GM10248 (cell line): ENCODE measurements at regions of chr3 and their contacts with region 1.

Region 1: GRCh38 chr3:58630076-58630709 is 36.4 kb downstream of the FAM3D start:
- DNase-seq: peak; percentile 68
- CTCF ChIP-seq: peak; percentile 88

Region 2: GRCh38 chr3:58608648-58609047 is 21.5 kb before region 1 on chr3:
- CTCF ChIA-PET with region 1: interaction called, 14 read pairs
- POLR2A ChIA-PET with region 1: no interaction called
- DNase-seq: no peak
- CTCF ChIP-seq: no peak

Region 3: GRCh38 chr3:58617338-58617761 is 12.8 kb before region 1 on chr3:
- CTCF ChIA-PET with region 1: interaction called, 29 read pairs
- POLR2A ChIA-PET with region 1: no interaction called
- DNase-seq: no peak
- CTCF ChIP-seq: no peak

Region 4: GRCh38 chr3:58640700-58641372 is 10.6 kb after region 1 on chr3:
- CTCF ChIA-PET with region 1: interaction called, 81 read pairs
- POLR2A ChIA-PET with region 1: no interaction called
- DNase-seq: peak; percentile 82
- CTCF ChIP-seq: peak; percentile 87

Region 5: DNA sequence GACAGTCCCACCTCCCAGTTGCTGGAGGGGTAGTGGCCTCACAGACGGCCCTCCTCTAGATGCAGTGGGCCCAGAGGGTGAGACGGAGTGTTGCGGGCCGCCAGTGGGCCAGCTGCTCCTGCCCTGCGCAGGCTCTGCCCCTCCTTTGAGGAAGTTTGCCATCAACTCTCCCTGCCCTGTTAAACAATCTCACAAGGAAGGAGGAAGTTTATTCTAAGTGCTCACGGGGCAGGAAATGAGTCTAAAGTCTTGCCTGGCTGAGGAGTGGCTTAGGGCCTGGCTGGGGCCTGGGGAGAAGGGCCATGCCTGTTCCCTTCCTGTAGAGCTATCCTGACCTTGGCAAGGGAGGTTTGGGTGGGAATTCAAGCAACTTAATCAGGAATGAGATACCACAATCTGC is 36.5 kb after region 1 on chr3 and contains the start of gene FAM3D:
- CTCF ChIA-PET with region 1: interaction called, 10 read pairs
- POLR2A ChIA-PET with region 1: interaction called, 3 read pairs
- DNase-seq: no peak
- CTCF ChIP-seq: no peak